ENCODE measurements at regions of chr17 and their contacts with region 1.

Region 1: GRCh38 chr17:11144358-11145233 is 96.4 kb upstream of the SHISA6 start:
- DNase-seq: no peak
- ATAC-seq: no peak
- H3K4me3 ChIP-seq: no peak overlapping the region
- H3K27ac ChIP-seq: no peak overlapping the region
- H3K4me1 ChIP-seq: no peaks in the 10 kb centered on the region
- H3K27me3 ChIP-seq: no peaks in the 10 kb centered on the region
- CTCF ChIP-seq: peak in 2 of 3 experiments; percentile 29 to 36; a peak in 2 of 6 replicates
- EP300 ChIP-seq: no peak
- POLR2A ChIP-seq: no peak
- RAD21 ChIP-seq: no peak

Region 2: DNA sequence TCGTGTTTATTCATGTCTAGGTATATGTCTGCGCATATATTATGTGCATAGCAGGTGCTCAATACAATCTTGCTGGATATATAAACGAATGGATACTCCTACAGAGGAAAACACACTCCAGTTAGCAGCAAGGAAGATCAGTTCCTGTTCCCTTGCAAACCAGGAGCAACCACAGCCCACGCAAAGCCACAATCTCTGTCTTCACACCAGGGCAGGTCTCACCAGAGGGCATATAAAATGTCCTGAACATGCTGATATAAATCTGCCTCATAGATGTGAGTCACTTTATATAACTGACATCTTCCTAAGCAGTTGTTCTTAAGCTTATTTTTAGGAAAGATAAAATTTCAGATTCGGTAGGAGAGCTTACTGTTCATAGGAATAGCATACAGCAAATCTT is 205.2 kb before region 1 on chr17:
- CTCF ChIA-PET with region 1: no interaction called
- POLR2A ChIA-PET with region 1: no interaction called
- RAD21 ChIA-PET with region 1: no interaction called
- SMC1A ChIA-PET with region 1: no interaction called
- in situ Hi-C with region 1: loop called (anchors 25 kb)
- intact Hi-C with region 1: no loop called
- DNase-seq: no peak
- ATAC-seq: no peak
- H3K4me3 ChIP-seq: no peak overlapping the region
- H3K27ac ChIP-seq: no peak overlapping the region
- H3K4me1 ChIP-seq: no peaks in the 10 kb centered on the region
- H3K27me3 ChIP-seq: no peaks in the 10 kb centered on the region
- CTCF ChIP-seq: no peak
- EP300 ChIP-seq: no peak
- POLR2A ChIP-seq: no peak
- RAD21 ChIP-seq: no peak

Region 3: GRCh38 chr17:11094331-11094730 is 50.3 kb before region 1 on chr17:
- CTCF ChIA-PET with region 1: no interaction called
- POLR2A ChIA-PET with region 1: no interaction called
- RAD21 ChIA-PET with region 1: no interaction called
- SMC1A ChIA-PET with region 1: no interaction called
- in situ Hi-C with region 1: loop called (anchors 5 kb)
- intact Hi-C with region 1: no loop called
- DNase-seq: no peak
- ATAC-seq: no peak
- H3K4me3 ChIP-seq: no peak overlapping the region
- H3K27ac ChIP-seq: no peak overlapping the region
- H3K4me1 ChIP-seq: no peaks in the 10 kb centered on the region
- H3K27me3 ChIP-seq: no peaks in the 10 kb centered on the region
- CTCF ChIP-seq: no peak
- EP300 ChIP-seq: no peak
- POLR2A ChIP-seq: no peak
- RAD21 ChIP-seq: no peak

Region 4: GRCh38 chr17:11238705-11239104 is 94.1 kb after region 1 on chr17:
- CTCF ChIA-PET with region 1: no interaction called
- POLR2A ChIA-PET with region 1: no interaction called
- RAD21 ChIA-PET with region 1: no interaction called
- SMC1A ChIA-PET with region 1: no interaction called
- in situ Hi-C with region 1: loop called (anchors 10 kb)
- intact Hi-C with region 1: no loop called
- DNase-seq: no peak
- ATAC-seq: no peak
- H3K4me3 ChIP-seq: no peak overlapping the region
- H3K27ac ChIP-seq: no peak overlapping the region
- H3K4me1 ChIP-seq: no peaks in the 10 kb centered on the region
- H3K27me3 ChIP-seq: no peaks in the 10 kb centered on the region
- CTCF ChIP-seq: no peak
- EP300 ChIP-seq: no peak
- POLR2A ChIP-seq: no peak
- RAD21 ChIP-seq: no peak

Measured in GM12878 (cell line).